ENCODE measurements at regions of chr3 and their contacts with region 1.

Region 1: DNA sequence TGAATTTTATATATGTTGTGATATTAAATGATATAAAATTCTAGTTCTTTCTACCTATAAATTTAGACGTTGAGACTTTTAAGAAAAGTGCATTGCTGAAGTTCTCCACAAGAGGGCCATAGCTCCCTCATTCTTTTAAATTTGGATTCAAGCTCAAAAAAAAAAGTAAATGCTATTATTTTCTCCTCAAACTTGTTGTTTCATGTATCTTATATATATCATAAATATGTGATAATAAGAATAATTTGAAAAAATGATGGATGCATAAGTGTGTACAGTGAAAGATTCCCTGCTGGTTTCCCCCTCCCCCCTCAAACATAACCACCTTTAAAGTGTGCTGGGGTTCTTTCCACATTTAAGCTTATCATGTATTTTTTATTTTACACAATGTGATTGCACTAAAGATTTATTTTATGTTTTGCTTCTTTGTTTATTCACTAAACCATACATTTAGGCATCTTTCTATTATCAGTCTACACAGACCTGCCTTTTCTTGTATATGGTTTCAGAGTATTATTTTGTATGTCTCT is 769.4 kb upstream of the GOLIM4 start:
- DNase-seq: no peak
- ATAC-seq: no peak

Region 2: DNA sequence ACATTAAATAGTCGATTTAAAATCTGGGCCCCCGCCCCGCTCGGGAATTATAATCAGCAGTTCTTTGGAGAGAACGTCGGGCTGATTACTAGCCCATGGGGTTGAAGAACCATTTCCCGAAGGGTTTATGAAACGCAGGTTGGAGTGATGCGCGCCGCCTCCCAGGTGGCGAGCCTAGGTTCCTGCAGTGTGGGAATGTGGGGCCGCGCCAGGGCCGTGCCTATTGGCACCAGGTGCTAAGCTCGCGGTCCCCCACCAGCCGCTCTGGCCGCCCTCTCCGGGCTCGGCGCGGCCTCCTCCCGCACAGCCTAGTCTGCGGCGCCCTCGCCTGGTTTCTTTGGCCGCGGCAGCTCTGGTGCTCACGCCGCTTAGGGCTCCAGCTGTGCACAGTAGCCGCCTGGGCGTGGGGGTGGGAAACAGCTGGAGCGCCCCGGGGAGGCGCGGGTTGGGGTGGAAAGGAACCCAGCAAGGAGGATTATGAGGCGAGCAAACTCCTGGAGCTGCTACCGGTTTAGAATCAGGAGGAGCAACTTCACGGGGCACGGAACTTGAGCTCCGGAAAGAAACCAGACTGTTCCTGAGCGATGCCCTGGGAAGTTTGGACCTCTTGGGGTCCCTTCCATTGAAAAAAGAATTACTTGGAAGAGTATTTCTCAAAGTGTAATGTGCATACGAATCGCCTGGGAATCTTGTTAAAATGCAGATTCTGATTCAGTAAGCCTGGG is 804.0 kb after region 1 on chr3:
- intact Hi-C with region 1: loop called in 1 of 2 experiments (anchors 10 kb)
- DNase-seq: peak; percentile 86
- ATAC-seq: peak; percentile 97 to 98

Region 3: DNA sequence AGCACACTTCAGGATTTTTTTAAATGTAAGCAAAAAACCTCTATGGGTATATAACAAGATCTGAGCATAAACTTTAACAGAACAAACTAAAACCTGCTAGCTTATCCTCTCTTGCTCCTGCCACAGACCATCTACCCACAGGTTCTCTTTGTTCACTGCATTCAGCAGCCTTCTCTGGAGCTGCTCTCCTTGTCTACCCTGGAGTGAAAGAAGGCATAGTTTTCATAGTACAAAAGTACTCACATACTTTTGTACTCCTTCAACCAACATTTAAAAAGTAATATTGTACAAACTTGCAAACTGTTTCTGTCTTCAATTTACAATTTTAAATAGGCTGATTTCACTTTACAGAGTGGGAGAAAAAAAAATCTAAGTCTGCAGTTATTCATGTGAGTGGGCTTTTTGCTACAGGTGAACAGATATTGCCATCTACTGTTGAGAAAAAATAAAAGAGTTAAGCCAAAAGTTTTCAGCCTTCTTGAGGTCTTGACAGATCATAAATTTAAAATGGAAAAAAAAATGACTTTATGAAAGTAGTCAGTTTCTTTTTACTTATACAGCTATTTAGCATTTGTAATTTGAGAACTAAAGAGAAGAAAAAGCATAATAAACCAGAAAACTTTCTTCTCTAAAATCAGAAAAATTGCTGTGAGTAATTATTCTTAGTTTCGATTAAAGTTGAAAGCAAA is 879.4 kb after region 1 on chr3:
- intact Hi-C with region 1: loop called in 1 of 2 experiments (anchors 5 kb)
- DNase-seq: no peak
- ATAC-seq: no peak